ENCODE measurements at regions of chr1 and their contacts with region 1.

Region 1: GRCh38 chr1:51768971-51769588 is 109.4 kb downstream of the NRDC start:
- DNase-seq: peak in 1 of 2 experiments; percentile 18
- H3K4me3 ChIP-seq: no peak overlapping the region
- H3K4me3 Mint-ChIP-seq: no peak overlapping the region
- H3K27ac Mint-ChIP-seq: no peak overlapping the region
- H3K4me1 ChIP-seq: no peaks in the 10 kb centered on the region
- H3K4me1 Mint-ChIP-seq: peaks cover 6% of the 10 kb centered on the region
- H3K27me3 ChIP-seq: no peaks in the 10 kb centered on the region
- H3K27me3 Mint-ChIP-seq: no peaks in the 10 kb centered on the region
- CTCF ChIP-seq: peak; percentile 49 to 63

Region 2: DNA sequence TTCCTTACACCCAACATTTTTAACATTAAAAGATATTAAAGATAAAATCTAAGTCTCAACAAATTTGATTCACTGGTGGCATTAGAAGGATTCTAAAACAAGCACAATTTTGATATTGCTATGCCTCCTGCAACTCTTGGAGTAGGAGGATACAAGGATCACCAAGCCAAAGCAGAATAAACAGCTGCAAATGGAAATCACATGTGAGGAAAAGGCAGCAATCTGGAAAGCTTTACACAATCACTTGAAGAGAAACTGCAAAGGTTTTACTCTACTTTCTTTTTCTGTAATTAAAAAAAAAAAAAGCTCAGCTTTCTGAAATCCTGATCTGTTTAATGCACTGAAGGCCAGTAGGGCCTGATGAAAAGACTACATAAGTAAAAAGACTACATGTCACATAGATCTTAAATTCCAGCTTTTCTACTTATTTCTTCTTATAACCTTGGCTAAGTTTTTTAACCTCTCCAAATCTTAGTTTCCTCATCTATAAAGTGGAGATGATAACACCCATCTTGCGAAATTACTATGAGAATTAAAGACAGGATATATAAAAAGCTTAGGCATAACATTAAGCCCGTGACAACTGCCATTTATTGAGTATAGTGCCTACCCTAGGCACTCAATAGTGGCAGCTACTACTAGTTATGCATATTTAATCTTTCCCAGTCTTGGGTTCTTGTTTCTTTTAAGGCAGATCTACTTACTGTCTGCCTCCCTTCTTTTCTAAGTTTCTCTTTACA is 323.6 kb before region 1 on chr1:
- CTCF ChIA-PET with region 1: no interaction called
- POLR2A ChIA-PET with region 1: no interaction called
- intact Hi-C with region 1: loop called (anchors 10 kb)
- DNase-seq: no peak
- H3K4me3 ChIP-seq: no peak overlapping the region
- H3K4me3 Mint-ChIP-seq: no peak overlapping the region
- H3K27ac Mint-ChIP-seq: no peak overlapping the region
- H3K4me1 ChIP-seq: no peaks in the 10 kb centered on the region
- H3K4me1 Mint-ChIP-seq: no peaks in the 10 kb centered on the region
- H3K27me3 ChIP-seq: no peaks in the 10 kb centered on the region
- H3K27me3 Mint-ChIP-seq: no peaks in the 10 kb centered on the region
- CTCF ChIP-seq: no peak

Region 3: GRCh38 chr1:51627678-51628077 is 141.4 kb before region 1 on chr1:
- CTCF ChIA-PET with region 1: interaction called, 17 read pairs
- POLR2A ChIA-PET with region 1: no interaction called
- intact Hi-C with region 1: loop called (anchors 1 kb)
- DNase-seq: peak in 1 of 2 experiments; percentile 49
- H3K4me3 ChIP-seq: no peak overlapping the region
- H3K4me3 Mint-ChIP-seq: no peak overlapping the region
- H3K27ac Mint-ChIP-seq: no peak overlapping the region
- H3K4me1 ChIP-seq: peaks cover 7% of the 10 kb centered on the region
- H3K4me1 Mint-ChIP-seq: peaks cover 20% of the 10 kb centered on the region
- H3K27me3 ChIP-seq: no peaks in the 10 kb centered on the region
- H3K27me3 Mint-ChIP-seq: no peaks in the 10 kb centered on the region
- CTCF ChIP-seq: peak in 1 of 2 experiments; percentile 45